ENCODE measurements at regions of chrX and their contacts with region 1.

Region 1: DNA sequence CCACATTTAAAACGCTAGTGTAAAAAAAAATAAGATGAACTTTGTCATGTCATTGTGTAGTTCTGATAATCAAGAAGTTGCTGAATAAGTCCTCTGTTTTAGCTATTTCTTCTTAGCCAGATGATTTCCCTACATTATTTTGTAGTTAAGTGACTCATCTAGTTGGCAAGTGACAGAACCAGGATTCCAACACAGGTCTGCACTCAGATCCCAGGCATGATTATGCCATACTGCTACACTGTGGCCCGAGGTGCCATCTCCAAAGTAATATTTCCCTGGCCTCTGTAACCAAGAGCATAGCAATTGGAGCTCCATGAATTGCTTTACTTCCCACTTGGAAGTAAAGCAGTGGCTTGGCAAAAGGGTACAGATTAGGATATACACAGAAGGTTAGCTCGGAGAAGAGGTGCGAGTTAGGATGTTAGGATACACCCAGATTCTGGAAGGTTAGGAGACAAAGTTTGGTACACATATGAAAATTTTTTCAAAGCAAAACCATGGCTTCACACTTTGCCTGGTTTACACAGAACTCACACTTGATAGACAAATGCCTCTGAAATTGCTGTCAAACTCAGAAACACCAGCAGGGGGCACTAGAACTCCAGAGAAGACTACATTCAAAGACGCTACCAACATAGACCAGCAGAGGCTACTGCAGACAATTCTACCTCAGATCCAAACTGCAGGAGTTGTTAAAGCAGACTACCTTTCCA is 41.4 kb downstream of the SRPX2 start:
- ATAC-seq: peak; percentile 63 to 89 (median 75)
- H3K4me3 ChIP-seq: no peak overlapping the region
- H3K27ac ChIP-seq: no peak overlapping the region
- H3K4me1 ChIP-seq: no peaks in the 10 kb centered on the region

Region 2: GRCh38 chrX:100768679-100769338 is 83.4 kb after region 1 on chrX:
- in situ Hi-C with region 1: loop called in 1 of 9 experiments (anchors 10 kb)
- ATAC-seq: peak in 1 of 8 experiments; percentile 46
- H3K4me3 ChIP-seq: no peak overlapping the region
- H3K27ac ChIP-seq: no peak overlapping the region
- H3K4me1 ChIP-seq: no peaks in the 10 kb centered on the region

Region 3: DNA sequence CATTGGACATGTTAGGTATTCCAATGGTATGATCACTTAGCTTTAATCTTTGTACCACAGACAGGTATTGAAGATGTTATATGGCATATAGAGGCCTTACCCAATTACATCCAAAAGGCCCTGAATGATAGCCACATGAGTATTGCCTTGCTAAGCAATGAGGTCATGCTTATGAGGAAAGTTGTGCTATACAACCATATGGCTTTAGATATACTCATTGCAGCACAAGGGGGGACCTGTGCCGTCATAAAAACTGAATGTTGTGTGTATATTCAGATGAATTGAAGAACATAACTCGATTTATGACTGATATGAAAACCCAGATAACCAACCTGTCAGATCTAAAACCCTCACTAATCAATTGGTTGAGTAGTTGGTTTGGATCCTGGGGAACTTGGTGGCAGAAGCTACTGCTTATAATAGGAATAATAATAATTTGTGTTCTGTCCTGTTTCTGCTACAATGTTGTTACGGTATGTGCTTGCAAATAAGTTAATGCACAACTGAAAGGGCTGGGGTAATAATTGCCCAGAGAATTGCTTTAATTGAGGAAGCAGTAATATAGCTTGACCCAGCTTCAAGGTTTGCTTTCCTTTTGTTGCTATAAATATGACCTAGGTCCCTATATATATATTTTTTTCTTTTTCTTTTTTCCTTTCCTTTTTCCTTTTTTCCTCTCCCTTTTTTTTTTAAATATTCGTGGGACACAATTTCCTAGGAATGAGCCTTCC is 113.2 kb after region 1 on chrX:
- in situ Hi-C with region 1: loop called in 1 of 9 experiments (anchors 25 kb)
- ATAC-seq: no peak
- H3K4me3 ChIP-seq: no peak overlapping the region
- H3K27ac ChIP-seq: no peak overlapping the region
- H3K4me1 ChIP-seq: no peaks in the 10 kb centered on the region

Region 4: GRCh38 chrX:100819837-100820666 is 134.6 kb after region 1 on chrX and contains the start of gene CSTF2:
- in situ Hi-C with region 1: no loop called
- ATAC-seq: peak; percentile 97 to 100 (median 99)
- H3K4me3 ChIP-seq: peak within 1 kb of the TSS; percentile 46 to 69 (median 55)
- H3K27ac ChIP-seq: peak within 1 kb of the TSS; percentile 40 to 61
- H3K4me1 ChIP-seq: peaks cover 0 to 4% of the 10 kb centered on the region in 2 donors
- total RNA-seq, gene CSTF2: 10.1 to 28.0 (median 17.5) TPM

Region 5: GRCh38 chrX:101287402-101287801 is 602.0 kb after region 1 on chrX:
- in situ Hi-C with region 1: loop called in 1 of 9 experiments (anchors 25 kb)
- ATAC-seq: peak in 2 of 8 experiments; percentile 27 to 51
- H3K4me3 ChIP-seq: no peak overlapping the region
- H3K27ac ChIP-seq: no peak overlapping the region
- H3K4me1 ChIP-seq: no peaks in the 10 kb centered on the region

Measured in motor neuron (in vitro differentiated cells).